Panc1 (cell line): ENCODE measurements at regions of chr2 and their contacts with region 1.

Region 1: GRCh38 chr2:168999668-169000213 is 31.4 kb downstream of the ABCB11 start:
- DNase-seq: no peak
- ATAC-seq: no peak
- H3K4me3 ChIP-seq: no peak overlapping the region
- H3K27ac ChIP-seq: no peak overlapping the region
- H3K4me1 ChIP-seq: no peaks in the 10 kb centered on the region
- H3K27me3 ChIP-seq: no peaks in the 10 kb centered on the region; the same call in none of the 2 replicates
- CTCF ChIP-seq: no peak

Region 2: GRCh38 chr2:168841445-168841844 is 158.3 kb before region 1 on chr2:
- CTCF ChIA-PET with region 1: no interaction called
- POLR2A ChIA-PET with region 1: no interaction called
- in situ Hi-C with region 1: no loop called
- intact Hi-C with region 1: no loop called
- DNase-seq: no peak
- ATAC-seq: no peak
- H3K4me3 ChIP-seq: no peak overlapping the region
- H3K27ac ChIP-seq: no peak overlapping the region
- H3K4me1 ChIP-seq: no peaks in the 10 kb centered on the region
- H3K27me3 ChIP-seq: no peaks in the 10 kb centered on the region
- CTCF ChIP-seq: no peak

Region 3: DNA sequence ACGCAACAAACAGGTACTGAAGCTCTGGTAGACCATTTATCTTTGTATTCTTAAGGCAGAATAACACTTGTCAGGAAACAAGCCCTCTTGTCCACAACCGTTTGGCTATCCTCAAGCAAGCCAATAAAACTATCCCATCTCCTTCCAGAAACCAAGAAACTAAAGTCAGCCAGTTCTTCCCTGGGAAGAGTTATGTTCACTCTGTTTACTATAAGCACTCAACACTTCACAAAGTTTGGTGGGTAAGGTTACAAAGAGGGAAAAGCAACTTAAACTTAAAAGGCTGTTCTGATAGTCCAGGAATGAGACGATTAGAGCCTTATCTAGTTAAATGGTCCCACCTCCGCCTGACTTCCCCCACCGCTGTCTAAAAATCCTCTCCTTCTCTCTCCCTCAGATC is 337.0 kb after region 1 on chr2:
- CTCF ChIA-PET with region 1: interaction called, 10 read pairs
- POLR2A ChIA-PET with region 1: no interaction called
- in situ Hi-C with region 1: no loop called
- intact Hi-C with region 1: no loop called
- DNase-seq: no peak
- ATAC-seq: no peak
- H3K4me3 ChIP-seq: no peak overlapping the region
- H3K27ac ChIP-seq: no peak overlapping the region
- H3K4me1 ChIP-seq: no peaks in the 10 kb centered on the region
- H3K27me3 ChIP-seq: peaks cover 19% of the 10 kb centered on the region
- CTCF ChIP-seq: no peak